ENCODE measurements at regions of chr7 and their contacts with region 1.

Region 1: DNA sequence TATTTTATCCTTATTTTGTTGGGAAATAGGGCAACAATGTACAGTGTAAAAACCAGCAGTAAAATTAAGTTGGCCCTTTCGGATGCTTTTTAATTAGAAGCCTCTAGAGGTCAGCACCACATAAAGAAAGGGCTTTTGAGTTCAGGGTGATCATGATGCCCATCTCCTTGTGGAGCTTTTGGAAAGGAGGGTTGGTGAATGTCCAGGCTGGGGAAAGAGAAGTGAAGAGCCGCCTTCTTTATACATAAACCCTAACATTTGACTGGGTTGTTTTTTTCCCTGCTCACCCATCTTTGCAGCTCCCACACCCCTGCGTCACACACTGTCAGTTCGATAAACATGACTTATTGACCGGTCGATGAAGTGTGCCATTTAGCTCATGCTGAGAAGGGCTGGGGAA is 29.8 kb downstream of the MTURN start:
- DNase-seq: peak; percentile 65
- H3K4me3 ChIP-seq: no peak overlapping the region
- H3K27ac ChIP-seq: peak overlapping the region in 1 of 2 experiments; percentile 77; a peak in 1 of 4 replicates
- H3K4me1 ChIP-seq: peaks cover 13 to 19% of the 10 kb centered on the region in 2 experiments
- H3K27me3 ChIP-seq: no peaks in the 10 kb centered on the region
- CTCF ChIP-seq: peak; percentile 85
- EP300 ChIP-seq: no peak
- RAD21 ChIP-seq: peak; percentile 95

Region 2: GRCh38 chr7:30134611-30135545 is 29.7 kb before region 1 on chr7 and contains the start of gene MTURN:
- CTCF ChIA-PET with region 1: interaction called, 10 read pairs
- POLR2A ChIA-PET with region 1: no interaction called
- DNase-seq: peak; percentile 100
- H3K4me3 ChIP-seq: peak within 1 kb of the TSS; percentile 72 to 86
- H3K27ac ChIP-seq: peak within 1 kb of the TSS; percentile 62 to 65
- H3K4me1 ChIP-seq: peaks cover 0 to 8% of the 10 kb centered on the region in 2 experiments; a peak in 1 of 4 replicates
- H3K27me3 ChIP-seq: no peaks in the 10 kb centered on the region
- CTCF ChIP-seq: no peak
- EP300 ChIP-seq: no peak; a peak in 1 of 4 replicates
- RAD21 ChIP-seq: no peak
- polyA plus RNA-seq, gene MTURN: 9.0 and 12.9 TPM in 2 replicates

Region 3: DNA sequence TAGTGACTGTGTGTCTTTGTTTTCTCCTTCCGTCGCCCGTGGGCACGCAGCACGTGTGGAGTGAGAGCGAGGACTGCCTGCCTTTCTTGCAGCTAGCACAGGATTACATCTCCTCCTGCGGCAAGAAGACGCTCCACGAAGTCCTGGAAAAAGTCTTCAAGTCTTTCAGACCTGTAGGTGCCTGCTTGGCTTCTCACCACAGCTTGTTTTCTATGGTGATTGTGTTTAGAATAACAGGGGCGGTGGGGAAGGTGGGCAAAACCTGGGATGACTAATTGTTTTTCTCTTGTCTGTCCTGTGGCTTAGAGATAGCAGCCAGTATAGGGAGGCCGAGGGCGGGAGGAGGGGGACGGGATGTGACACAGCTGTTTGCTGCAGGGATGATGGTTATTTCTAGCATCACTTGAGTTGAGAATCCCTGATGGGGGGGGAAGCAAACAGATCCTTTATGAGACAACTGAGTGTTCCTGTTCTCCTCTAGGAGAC is 18.4 kb before region 1 on chr7:
- CTCF ChIA-PET with region 1: interaction called, 12 read pairs
- POLR2A ChIA-PET with region 1: no interaction called
- DNase-seq: peak; percentile 73
- H3K4me3 ChIP-seq: no peak overlapping the region
- H3K27ac ChIP-seq: no peak overlapping the region
- H3K4me1 ChIP-seq: peaks cover 7 to 31% of the 10 kb centered on the region in 2 experiments
- H3K27me3 ChIP-seq: no peaks in the 10 kb centered on the region
- CTCF ChIP-seq: no peak
- EP300 ChIP-seq: no peak
- RAD21 ChIP-seq: no peak

Region 4: DNA sequence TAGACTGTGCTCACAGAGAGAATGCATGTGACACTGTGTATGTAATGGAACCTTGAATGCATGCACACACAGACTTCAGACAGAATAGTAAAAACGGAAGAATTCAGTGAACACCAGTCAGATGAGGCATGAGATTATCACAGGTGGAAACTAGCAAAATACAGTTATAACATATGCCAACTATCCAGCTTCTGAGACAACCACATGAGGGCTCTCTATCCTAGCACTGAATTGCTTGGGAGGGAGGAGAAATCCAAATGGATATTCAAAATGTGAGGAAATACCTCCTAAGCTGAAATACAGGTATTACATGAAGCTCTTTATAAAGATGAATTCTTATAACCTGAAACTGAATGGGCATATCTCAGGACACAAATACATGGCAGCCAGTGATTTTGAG is 460.7 kb after region 1 on chr7:
- CTCF ChIA-PET with region 1: no interaction called
- POLR2A ChIA-PET with region 1: no interaction called
- DNase-seq: no peak
- H3K4me3 ChIP-seq: no peak overlapping the region
- H3K27ac ChIP-seq: no peak overlapping the region
- H3K4me1 ChIP-seq: no peaks in the 10 kb centered on the region
- H3K27me3 ChIP-seq: no peaks in the 10 kb centered on the region
- CTCF ChIP-seq: no peak
- EP300 ChIP-seq: no peak
- RAD21 ChIP-seq: peak; percentile 51